ENCODE measurements at regions of chrX and their contacts with region 1.

Region 1: GRCh38 chrX:130339408-130340222 is at the start of gene SLC25A14:
- DNase-seq: peak; percentile 67 to 85
- ATAC-seq: peak; percentile 82 to 99 (median 90)
- H3K4me3 ChIP-seq: peak within 1 kb of the TSS; percentile 80
- H3K27ac ChIP-seq: peak within 1 kb of the TSS; percentile 60
- H3K4me1 ChIP-seq: no peaks in the 10 kb centered on the region
- H3K27me3 ChIP-seq: no peaks in the 10 kb centered on the region
- CTCF ChIP-seq: no peak
- total RNA-seq, gene SLC25A14: 3.5 to 7.1 (median 5.3) TPM

Region 2: DNA sequence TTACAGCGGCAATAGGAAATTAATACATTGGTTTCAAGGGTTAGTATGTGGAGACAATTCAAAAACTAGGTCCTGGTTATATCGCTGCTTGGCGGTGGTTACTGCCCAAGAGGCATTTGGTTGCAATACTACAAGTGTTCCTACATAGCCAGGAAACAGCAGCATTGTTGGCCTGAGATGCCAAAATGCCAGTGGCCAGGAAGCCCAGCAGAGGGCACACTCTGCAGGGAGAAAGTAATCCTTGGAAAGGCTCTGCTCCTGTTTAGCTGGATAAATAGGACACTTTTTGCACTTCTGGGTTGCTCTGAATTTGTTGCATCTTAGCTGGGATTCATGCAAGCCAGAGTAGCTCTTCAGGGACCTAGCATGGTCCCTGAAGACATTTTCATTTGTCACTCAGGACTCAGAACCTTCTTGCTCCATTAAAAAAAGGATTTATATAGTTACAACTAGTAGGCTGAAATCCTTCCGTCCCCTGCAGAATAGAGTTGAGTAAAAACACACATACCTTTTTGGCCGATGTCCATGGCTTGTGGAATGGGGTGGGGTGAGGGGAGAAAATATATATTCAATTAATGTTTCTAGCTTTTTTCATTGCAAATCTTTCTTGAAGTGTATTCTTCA is 53.9 kb after region 1 on chrX:
- intact Hi-C with region 1: loop called in 1 of 2 experiments (anchors 5 kb)
- DNase-seq: peak in 1 of 2 donors; percentile 18
- ATAC-seq: peak in 2 of 4 donors; percentile 57 to 71
- H3K4me3 ChIP-seq: no peak overlapping the region
- H3K27ac ChIP-seq: no peak overlapping the region
- H3K4me1 ChIP-seq: no peaks in the 10 kb centered on the region
- H3K27me3 ChIP-seq: peaks cover 0 to 7% (median 0%) of the 10 kb centered on the region in 3 donors
- CTCF ChIP-seq: peak; percentile 62

Measured in psoas muscle (tissue), 8 donors.